Activated CD4-positive, alpha-beta memory T cell treated with anti-CD3 and anti-CD28 coated beads, Interleukin-2, amount 10 ng/mL, durations not matched to agents 7 days and 5 days (primary cell): ENCODE measurements at regions of chr1 and their contacts with region 1.

Region 1: GRCh38 chr1:111719674-111720132 is 19.5 kb downstream of the INKA2 start:
- DNase-seq: no peak
- H3K4me3 Mint-ChIP-seq: no peak overlapping the region
- H3K27ac Mint-ChIP-seq: no peak overlapping the region
- H3K4me1 Mint-ChIP-seq: peaks cover 22% of the 10 kb centered on the region
- H3K27me3 Mint-ChIP-seq: no peaks in the 10 kb centered on the region

Region 2: GRCh38 chr1:111739194-111739924 is 19.7 kb after region 1 on chr1 and contains the start of gene INKA2:
- CTCF ChIA-PET with region 1: interaction called, 63 read pairs
- POLR2A ChIA-PET with region 1: interaction called, 13 read pairs
- DNase-seq: peak; percentile 86
- H3K4me3 Mint-ChIP-seq: peak within 1 kb of the TSS; percentile 84
- H3K27ac Mint-ChIP-seq: peak within 1 kb of the TSS; percentile 52
- H3K4me1 Mint-ChIP-seq: peaks cover 23% of the 10 kb centered on the region
- H3K27me3 Mint-ChIP-seq: peaks cover 47% of the 10 kb centered on the region
- total RNA-seq, gene INKA2: 2.4 to 2.8 TPM

Region 3: GRCh38 chr1:111747282-111747734 is 27.6 kb after region 1 on chr1:
- CTCF ChIA-PET with region 1: interaction called, 63 read pairs
- POLR2A ChIA-PET with region 1: interaction called, 11 read pairs
- DNase-seq: peak; percentile 79
- H3K4me3 Mint-ChIP-seq: no peak overlapping the region
- H3K27ac Mint-ChIP-seq: no peak overlapping the region
- H3K4me1 Mint-ChIP-seq: peaks cover 12% of the 10 kb centered on the region
- H3K27me3 Mint-ChIP-seq: peaks cover 20% of the 10 kb centered on the region

Region 4: DNA sequence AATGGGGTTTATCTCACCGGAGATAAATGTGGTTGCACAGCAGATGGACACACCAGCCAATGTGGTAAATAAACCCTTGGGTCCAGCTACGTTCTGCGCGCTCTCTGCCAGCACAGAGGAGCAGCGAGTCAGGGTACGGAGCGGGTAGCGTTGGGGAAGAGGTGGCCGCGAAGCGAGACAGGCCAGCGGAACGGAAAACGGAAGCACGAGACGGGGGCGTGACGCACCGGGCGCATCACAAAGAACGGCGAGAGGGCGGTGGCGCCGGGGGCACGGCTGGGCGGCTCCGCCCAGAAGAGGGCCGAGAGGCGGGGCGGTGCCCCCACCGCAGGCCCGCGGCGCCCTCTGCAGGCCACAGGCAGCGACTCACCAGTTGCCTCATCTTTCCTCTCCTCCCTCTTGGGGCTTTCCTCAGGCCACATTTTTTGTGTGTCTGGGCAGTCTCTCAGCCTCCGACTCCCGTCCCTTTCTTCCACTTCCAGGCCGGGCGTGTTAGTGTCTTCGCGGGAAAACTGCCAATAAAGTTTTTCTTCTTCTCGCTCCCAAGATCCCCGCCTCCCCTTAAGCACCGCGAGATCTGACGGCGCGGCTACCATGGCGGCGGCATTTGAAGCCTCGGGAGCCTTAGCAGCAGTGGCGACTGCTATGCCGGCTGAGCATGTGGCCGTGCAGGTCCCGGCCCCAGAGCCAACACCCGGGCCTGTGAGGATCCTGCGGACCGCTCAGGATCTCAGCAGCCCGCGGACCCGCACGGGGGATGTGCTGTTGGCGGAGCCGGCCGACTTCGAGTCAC is 35.8 kb after region 1 on chr1 and contains the start of gene DDX20:
- CTCF ChIA-PET with region 1: interaction called, 36 read pairs
- POLR2A ChIA-PET with region 1: interaction called, 5 read pairs
- DNase-seq: peak; percentile 94
- H3K4me3 Mint-ChIP-seq: peak within 1 kb of the TSS; percentile 93
- H3K27ac Mint-ChIP-seq: peak within 1 kb of the TSS; percentile 96
- H3K4me1 Mint-ChIP-seq: peaks cover 48% of the 10 kb centered on the region
- H3K27me3 Mint-ChIP-seq: peaks cover 4% of the 10 kb centered on the region
- total RNA-seq, gene DDX20: 11.2 to 11.8 TPM

Region 5: DNA sequence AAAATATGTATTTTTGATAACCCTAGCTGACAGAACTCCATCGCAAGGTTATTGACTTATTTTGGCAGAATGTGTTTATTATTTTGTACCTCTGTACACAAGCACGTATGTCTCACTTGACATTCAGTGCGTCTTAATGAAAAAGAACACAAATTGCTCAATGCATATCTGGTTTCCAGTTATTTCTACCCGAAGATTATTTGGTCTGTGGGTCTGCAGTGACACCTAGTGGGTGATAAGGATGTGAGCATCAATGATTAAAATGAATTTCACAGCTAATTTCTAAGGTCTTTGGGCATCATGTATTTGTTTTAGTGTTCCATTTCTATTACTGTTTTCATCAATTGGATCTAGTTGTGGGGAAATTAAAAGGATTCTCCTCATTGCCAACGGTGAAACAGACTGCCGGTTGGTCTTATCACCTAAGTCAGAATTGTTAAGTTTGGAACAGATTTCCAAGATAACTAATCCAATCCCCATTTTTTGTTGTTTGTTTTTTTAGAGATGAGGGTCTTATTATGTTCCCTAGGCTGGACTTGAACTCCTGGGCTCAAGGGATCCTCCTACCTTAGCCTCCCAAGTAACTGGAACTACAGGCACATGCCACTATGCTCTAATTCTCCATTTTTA is 49.9 kb after region 1 on chr1:
- CTCF ChIA-PET with region 1: interaction called, 13 read pairs
- POLR2A ChIA-PET with region 1: interaction called, 3 read pairs
- DNase-seq: peak; percentile 54
- H3K4me3 Mint-ChIP-seq: no peak overlapping the region
- H3K27ac Mint-ChIP-seq: no peak overlapping the region
- H3K4me1 Mint-ChIP-seq: peaks cover 2% of the 10 kb centered on the region
- H3K27me3 Mint-ChIP-seq: no peaks in the 10 kb centered on the region